GM23248 (cell line): ENCODE measurements at regions of chr1 and their contacts with region 1.

Region 1: GRCh38 chr1:40951943-40952743 is 27.4 kb upstream of the CTPS1 start:
- DNase-seq: peak; percentile 63
- H3K4me3 ChIP-seq: no peak overlapping the region
- H3K27ac ChIP-seq: no peak overlapping the region
- H3K4me1 ChIP-seq: peaks cover 8% of the 10 kb centered on the region; the same call in 1 of the 2 replicates
- H3K27me3 ChIP-seq: no peaks in the 10 kb centered on the region

Region 2: DNA sequence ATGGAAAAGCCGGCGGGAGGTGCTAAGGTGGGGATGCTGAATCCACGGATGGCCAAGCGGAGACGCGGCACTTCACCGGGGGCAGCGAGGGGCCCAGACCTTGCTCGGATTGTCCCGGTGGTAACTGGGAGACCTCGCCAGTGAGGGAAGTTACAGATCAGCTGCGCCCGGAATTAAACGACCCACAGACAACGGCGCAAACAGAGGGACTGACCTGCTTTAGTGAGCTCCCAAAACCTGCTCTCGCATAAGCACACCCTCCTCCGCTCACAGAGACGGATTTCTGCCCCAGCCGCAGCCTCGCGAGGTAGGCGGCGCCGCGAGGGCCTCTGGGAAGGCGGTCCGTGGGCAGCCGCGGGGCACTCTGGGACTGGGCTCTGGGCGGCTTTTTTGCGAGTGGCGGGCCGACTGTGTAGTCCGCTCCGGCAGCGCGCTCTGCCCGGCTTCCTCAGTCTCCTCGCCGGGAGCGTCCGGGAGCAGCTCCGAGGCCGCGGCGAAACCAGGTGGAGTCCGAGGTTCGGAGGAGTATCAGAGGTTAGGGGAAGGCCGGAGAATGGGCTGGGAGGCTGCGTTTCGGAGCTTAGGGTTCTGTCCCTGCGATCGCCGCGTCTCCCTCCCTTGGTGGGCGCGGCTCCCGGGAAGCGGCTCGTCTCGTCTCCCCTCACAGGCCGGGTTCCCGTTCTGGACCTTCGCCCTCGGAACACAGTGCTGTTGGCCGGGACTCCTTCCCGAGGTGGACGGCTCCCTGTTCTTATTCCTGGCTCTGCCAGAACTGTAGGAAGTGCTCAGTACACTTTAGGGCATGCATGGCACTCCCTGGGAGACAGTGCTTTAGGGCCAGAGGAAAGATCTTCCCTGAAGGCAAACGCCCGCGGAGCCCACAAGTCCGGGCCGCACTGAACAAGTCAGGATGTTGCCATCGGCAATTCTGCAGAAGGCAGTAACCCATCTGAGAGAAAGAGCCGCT is 443.5 kb before region 1 on chr1 and contains the start of gene EXO5:
- in situ Hi-C with region 1: no loop called
- DNase-seq: peak; percentile 95
- H3K4me3 ChIP-seq: peak within 1 kb of the TSS; percentile 92
- H3K27ac ChIP-seq: peak within 1 kb of the TSS; percentile 66
- H3K4me1 ChIP-seq: 0 out of 2 replicates have a peak, but pooled peaks cover 6% of the 10 kb centered on the region
- H3K27me3 ChIP-seq: no peaks in the 10 kb centered on the region
- total RNA-seq, gene EXO5: 6.6 and 23.8 TPM in 2 replicates

Region 3: GRCh38 chr1:40612345-40612831 is 339.8 kb before region 1 on chr1:
- in situ Hi-C with region 1: loop called (anchors 10 kb)
- DNase-seq: peak; percentile 74
- H3K4me3 ChIP-seq: no peak overlapping the region
- H3K27ac ChIP-seq: no peak overlapping the region
- H3K4me1 ChIP-seq: no peaks in the 10 kb centered on the region
- H3K27me3 ChIP-seq: peaks cover 4% of the 10 kb centered on the region

Region 4: DNA sequence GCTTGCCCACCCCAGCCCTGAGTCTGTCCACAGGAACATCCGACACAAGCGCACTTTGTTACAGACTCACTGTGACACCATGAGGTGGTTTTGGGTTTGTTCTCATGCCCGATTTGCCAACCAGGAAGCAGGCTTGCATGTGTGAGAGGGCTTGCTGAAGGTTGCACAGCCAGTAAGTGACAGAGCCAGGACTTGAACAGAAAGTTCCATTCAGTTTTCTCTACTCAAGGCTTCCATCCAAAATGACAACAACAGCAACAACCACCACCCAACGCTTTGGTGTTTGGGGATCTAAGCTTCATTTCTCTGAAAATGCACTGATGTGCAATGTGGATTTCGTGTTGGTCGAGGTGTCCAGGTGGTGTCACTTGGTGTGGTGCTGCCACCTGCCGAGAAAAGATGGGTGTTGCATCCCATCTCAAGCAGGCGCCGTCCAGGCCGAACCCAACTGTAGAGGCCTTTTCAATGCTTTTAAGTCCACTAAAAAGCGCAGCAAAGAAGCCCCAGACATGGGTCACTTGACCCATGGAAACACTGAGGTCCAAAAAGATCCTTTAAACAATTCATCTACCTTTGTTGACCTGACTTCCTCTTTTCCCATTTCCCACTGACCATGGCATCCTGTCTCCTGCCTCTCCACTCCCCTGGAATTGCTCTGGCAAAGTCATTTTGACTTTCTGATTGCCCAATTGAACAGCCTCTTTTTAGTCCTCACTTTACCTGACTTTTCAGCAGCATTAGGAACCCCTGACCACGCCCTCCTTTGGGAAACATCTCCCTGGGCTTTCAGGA is 102.1 kb before region 1 on chr1:
- in situ Hi-C with region 1: loop called (anchors 5 kb)
- DNase-seq: peak; percentile 70
- H3K4me3 ChIP-seq: no peak overlapping the region
- H3K27ac ChIP-seq: no peak overlapping the region
- H3K4me1 ChIP-seq: no peaks in the 10 kb centered on the region
- H3K27me3 ChIP-seq: no peaks in the 10 kb centered on the region

Region 5: DNA sequence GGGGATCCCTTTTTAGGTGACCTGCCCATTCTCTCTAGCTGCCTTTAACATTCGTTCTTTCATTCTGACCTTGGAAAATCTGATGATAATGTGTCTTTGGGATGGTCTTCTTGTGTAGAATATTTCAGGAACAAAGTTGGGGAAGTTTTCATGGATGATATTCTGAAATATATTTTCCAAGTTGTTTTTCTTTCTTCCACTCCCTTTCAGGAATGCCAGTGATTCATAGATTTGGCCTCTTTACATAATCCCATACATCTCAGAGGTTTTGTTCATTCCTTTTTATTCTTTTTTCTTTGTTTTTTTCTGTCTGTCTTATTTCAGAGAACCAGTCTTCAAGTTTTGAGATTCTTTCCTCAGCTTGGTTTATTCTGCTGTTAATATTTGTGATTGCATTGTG is 303.8 kb after region 1 on chr1:
- in situ Hi-C with region 1: no loop called
- DNase-seq: peak; percentile 24
- H3K4me3 ChIP-seq: no peak overlapping the region
- H3K27ac ChIP-seq: no peak overlapping the region
- H3K4me1 ChIP-seq: peaks cover 9% of the 10 kb centered on the region
- H3K27me3 ChIP-seq: 0 out of 2 replicates have a peak, but pooled peaks cover 3% of the 10 kb centered on the region

Region 6: DNA sequence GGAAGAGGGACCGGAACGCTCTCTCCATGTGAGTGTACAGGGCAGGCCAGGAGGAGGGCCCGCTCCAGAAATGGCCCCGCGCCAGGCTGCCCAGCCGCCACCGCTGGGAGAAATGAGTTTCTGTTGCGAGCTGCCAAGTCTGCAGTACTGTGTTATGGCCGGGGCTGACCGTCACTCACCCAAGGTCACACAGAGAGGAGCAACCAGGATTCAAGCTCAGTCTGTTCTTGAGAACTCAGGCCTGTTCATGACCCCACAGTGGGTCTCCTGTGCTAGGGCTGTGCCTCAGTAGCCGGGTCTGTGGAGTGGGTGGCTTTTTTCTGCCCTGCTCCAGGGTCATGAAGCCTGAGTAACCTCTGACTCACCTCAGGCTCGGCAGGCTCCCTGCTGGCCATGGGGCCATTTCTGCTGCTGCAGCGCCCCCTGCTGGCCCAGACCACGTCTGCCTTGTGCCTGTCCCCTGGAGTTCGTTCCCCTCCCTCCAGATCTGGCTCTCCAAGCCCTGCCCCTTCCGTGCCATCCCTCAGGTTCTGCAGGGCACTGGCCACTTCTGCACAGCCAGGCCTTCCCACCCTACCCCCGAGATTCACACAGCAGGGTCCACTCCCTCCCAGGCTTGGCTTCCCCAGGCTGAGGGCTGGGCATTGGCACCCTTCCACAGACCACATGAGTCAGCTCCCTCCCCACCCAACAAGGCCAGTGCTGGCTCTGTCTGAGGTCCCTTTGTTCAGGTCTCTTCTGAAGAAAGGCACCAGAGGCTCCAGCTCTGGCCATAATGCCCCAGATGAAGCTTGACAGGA is 480.5 kb after region 1 on chr1:
- in situ Hi-C with region 1: no loop called
- DNase-seq: peak; percentile 92
- H3K4me3 ChIP-seq: peak overlapping the region; percentile 21; the same call in 1 of the 2 replicates
- H3K27ac ChIP-seq: peak overlapping the region; percentile 6; the same call in 1 of the 2 replicates
- H3K4me1 ChIP-seq: peaks cover 16% of the 10 kb centered on the region
- H3K27me3 ChIP-seq: peaks cover 8% of the 10 kb centered on the region; the same call in 1 of the 2 replicates